Activated CD4-positive, alpha-beta T cell treated with anti-CD3 and anti-CD28 coated beads for 36 hours (primary cell): ENCODE measurements at regions of chrX and their contacts with region 1.

Region 1: DNA sequence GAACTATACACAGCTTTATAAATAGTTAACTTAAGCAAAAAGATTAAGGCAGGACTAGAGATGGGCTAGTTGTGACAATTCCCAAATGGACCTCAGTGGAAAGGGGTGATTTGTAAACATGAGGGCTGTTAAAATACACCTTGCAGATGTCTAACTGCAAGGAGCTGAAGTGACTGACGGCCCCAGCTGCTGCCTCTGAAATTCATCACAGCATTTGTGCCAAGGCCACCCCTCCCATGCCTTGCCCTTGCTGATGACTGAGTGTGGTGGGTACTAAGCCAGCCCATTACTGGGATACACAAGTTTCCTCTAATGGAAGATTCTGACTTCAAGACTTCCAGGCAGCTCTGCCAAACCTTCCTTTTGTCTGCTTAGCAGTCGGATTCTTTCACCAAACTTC is 23.7 kb upstream of the EGFL6 start:
- DNase-seq: no peak
- ATAC-seq: no peak
- H3K4me3 Mint-ChIP-seq: no peak overlapping the region
- H3K27ac Mint-ChIP-seq: no peak overlapping the region
- H3K4me1 Mint-ChIP-seq: peaks cover 10% of the 10 kb centered on the region
- H3K27me3 Mint-ChIP-seq: peaks cover 13% of the 10 kb centered on the region

Region 2: GRCh38 chrX:13283950-13284914 is 261.5 kb before region 1 on chrX:
- CTCF ChIA-PET with region 1: no interaction called
- POLR2A ChIA-PET with region 1: no interaction called
- intact Hi-C with region 1: no loop called
- DNase-seq: no peak
- ATAC-seq: no peak
- H3K4me3 Mint-ChIP-seq: no peak overlapping the region
- H3K27ac Mint-ChIP-seq: no peak overlapping the region
- H3K4me1 Mint-ChIP-seq: no peaks in the 10 kb centered on the region
- H3K27me3 Mint-ChIP-seq: no peaks in the 10 kb centered on the region

Region 3: DNA sequence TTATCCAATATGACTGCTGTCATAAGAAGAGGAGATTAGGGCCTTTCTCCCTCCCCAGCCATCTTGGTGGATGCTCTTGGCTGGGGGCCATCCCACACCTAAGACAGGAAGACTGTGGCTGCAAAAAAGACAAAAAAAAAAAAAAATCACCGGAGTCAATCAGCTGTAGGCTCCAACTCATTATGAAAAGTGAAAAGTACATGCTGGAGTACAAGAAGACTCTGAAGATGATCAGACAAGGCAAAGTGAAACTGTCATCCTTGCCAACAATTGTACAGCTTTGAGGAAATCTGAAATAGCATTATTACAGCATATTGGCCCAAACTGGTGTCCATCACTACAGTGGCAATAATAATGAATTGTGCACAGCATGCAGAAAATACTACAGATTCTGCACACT is 28.9 kb after region 1 on chrX:
- CTCF ChIA-PET with region 1: no interaction called
- POLR2A ChIA-PET with region 1: no interaction called
- intact Hi-C with region 1: loop called in 1 of 2 experiments (anchors 2 kb)
- DNase-seq: no peak
- ATAC-seq: peak; percentile 30
- H3K4me3 Mint-ChIP-seq: no peak overlapping the region
- H3K27ac Mint-ChIP-seq: no peak overlapping the region
- H3K4me1 Mint-ChIP-seq: peaks cover 11% of the 10 kb centered on the region
- H3K27me3 Mint-ChIP-seq: peaks cover 18% of the 10 kb centered on the region

Region 4: GRCh38 chrX:13646154-13646549 is 100.4 kb after region 1 on chrX:
- CTCF ChIA-PET with region 1: no interaction called
- POLR2A ChIA-PET with region 1: no interaction called
- intact Hi-C with region 1: loop called in 1 of 2 experiments (anchors 5 kb)
- DNase-seq: peak; percentile 68
- ATAC-seq: peak; percentile 31
- H3K4me3 Mint-ChIP-seq: no peak overlapping the region
- H3K27ac Mint-ChIP-seq: no peak overlapping the region
- H3K4me1 Mint-ChIP-seq: peaks cover 12% of the 10 kb centered on the region
- H3K27me3 Mint-ChIP-seq: no peaks in the 10 kb centered on the region